Gastrocnemius medialis (tissue), 4 donors: ENCODE measurements at regions of chr5 and their contacts with region 1.

Region 1: DNA sequence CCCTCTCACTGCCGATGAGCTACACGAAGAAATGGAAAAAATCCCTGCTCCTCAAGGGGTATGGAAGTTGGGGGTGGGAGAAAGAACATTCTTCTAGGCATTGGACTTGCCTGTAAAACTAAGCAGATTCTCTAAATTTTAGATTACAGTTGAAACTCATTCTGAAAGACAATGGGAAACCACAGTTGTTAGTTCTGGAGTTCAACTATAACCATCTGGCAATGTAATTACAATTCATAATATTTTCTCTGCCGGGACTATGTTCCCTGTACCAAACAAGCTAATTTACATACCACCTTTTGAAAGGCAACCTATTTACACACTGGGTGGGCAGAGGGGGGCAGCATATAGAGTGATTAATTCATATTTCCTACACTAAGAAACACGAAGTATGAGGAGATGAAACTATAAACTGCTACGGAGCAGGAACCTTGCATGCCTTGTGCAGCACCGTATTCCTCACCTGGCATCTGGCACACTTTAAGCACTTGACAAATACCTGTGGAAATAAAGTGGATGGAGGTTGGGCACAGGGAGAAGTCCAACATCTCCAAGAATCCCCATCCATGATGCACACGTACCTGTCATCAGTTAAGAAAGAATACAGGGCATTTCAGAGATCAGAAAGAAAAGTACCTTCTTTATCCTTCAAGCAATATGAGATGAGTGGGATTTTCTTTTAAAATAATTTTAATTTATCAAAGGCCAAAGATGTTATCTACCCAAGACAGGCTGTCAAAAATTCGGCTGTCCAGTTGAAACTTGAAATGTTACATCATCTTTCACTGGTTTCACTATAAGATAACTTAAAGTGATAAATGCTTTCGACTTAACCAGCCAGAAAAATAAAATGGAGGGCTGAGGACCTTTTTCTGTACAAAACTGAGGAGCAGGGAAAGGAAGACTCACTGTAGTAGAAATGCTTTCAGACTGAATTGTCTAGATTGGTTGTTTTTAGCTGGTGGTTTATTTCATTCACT is 54.2 kb downstream of the SSBP2 start:
- DNase-seq: no peak
- ATAC-seq: no peak
- H3K4me3 ChIP-seq: no peak overlapping the region
- H3K27ac ChIP-seq: no peak overlapping the region
- H3K4me1 ChIP-seq: peaks cover 0 to 9% of the 10 kb centered on the region in 2 donors
- H3K27me3 ChIP-seq: no peaks in the 10 kb centered on the region
- CTCF ChIP-seq: no peak
- POLR2A ChIP-seq: no peak

Region 2: GRCh38 chr5:81425569-81425968 is 271.1 kb before region 1 on chr5:
- in situ Hi-C with region 1: no loop called
- intact Hi-C with region 1: no loop called
- DNase-seq: no peak
- ATAC-seq: peak; percentile 24 to 48
- H3K4me3 ChIP-seq: no peak overlapping the region
- H3K27ac ChIP-seq: peak overlapping the region; percentile 27 to 55 (median 44)
- H3K4me1 ChIP-seq: peaks cover 37 to 56% of the 10 kb centered on the region in 2 donors
- H3K27me3 ChIP-seq: no peaks in the 10 kb centered on the region
- CTCF ChIP-seq: peak; percentile 47 to 73 (median 62)
- POLR2A ChIP-seq: no peak

Region 3: DNA sequence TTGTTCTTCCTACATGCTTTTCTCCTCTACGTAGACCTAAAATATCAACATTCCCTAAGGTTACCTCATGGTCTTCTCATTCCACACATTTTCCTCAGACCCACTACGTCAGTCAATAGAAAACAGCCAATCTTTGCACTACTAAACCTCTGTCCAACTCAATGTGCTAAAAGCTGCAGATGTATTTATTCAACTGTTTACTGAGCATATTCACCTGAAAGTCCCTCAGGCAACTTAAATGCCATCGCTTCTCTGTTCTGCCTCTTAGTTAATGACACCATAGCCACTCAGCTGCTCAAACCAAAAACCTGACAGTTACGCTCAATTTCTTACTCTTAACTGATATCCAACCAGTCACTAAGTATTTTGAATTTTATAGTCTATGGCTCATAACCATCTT is 20.9 kb before region 1 on chr5:
- in situ Hi-C with region 1: no loop called
- intact Hi-C with region 1: loop called (anchors 1 kb)
- DNase-seq: no peak
- ATAC-seq: no peak
- H3K4me3 ChIP-seq: no peak overlapping the region
- H3K27ac ChIP-seq: no peak overlapping the region
- H3K4me1 ChIP-seq: peaks cover 16 to 23% of the 10 kb centered on the region in 2 donors
- H3K27me3 ChIP-seq: no peaks in the 10 kb centered on the region
- CTCF ChIP-seq: no peak
- POLR2A ChIP-seq: no peak